GM18951 (cell line): ENCODE measurements at regions of chr16 and their contacts with region 1.

Region 1: GRCh38 chr16:23182460-23183309 is at the start of gene SCNN1G:
- POLR2A ChIP-seq: no peak

Region 2: DNA sequence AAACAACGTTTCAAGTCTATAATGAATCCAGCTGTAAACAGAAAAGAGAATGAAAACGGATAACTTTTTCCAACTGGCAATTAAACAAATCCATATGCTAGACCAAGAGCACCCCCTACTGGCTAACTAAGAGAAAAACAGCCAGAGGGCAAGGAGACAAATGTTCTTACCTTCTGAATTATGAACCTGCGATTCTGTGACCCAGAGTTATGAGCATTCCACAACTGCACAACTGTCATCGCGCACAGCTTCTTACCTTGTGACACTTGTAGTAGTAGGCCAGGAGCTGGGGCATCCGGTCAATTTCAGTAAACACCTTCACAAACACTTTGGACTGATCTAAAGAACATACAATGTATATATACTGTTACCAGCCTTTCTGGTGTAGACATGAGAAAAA is 251.7 kb after region 1 on chr16:
- in situ Hi-C with region 1: loop called (anchors 5 kb)
- POLR2A ChIP-seq: no peak